CD8-positive, alpha-beta memory T cell (primary cell): ENCODE measurements at regions of chr3 and their contacts with region 1.

Region 1: DNA sequence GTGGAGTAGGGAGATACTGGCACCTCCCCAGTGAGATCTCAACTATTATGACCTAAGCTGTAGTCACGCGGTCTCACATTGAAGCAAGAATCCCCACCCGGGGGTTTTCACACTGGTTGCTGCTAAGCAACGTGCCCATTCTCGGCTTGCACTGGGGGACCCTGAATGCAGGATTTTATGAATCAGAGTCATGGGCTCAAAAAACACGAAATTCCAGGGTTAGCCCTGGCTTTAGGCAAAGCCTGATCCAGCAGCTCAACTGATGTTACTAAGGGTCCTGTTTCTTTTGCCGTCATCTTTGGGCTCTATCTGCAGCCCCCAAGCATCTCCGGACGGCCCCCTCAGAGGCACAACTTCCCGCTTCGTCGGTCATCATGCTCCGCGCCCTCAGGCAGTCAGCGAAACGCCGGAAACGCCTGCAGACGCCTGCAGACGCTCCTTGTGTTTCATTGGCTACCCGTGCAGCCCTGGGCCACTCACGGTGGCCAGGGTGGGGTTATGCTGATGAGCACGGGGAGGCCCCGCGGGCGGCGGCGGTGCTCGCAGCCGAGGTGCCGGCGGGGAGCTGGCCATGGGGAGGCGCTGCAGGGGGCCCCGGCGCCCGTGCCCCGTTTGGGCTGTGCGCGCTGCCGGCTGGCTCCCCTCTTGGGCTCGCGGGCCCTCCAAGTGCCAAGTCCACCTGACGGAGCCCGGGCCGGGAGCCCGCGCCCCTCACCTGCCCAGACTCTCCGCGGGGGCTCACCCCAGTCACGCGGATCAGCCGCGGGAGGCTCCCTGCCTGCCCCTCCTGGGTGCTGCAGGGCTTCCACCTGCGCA is 25.8 kb downstream of the EFCC1 start:
- DNase-seq: peak; percentile 89 to 95 (median 93)
- H3K4me3 ChIP-seq: peak overlapping the region; percentile 66
- H3K4me3 Mint-ChIP-seq: peak overlapping the region; percentile 26 to 93 (median 85)
- H3K27ac ChIP-seq: peak overlapping the region; percentile 77
- H3K27ac Mint-ChIP-seq: peak overlapping the region; percentile 92 to 99 (median 98)
- H3K4me1 ChIP-seq: peaks cover 16% of the 10 kb centered on the region
- H3K4me1 Mint-ChIP-seq: peaks cover 24 to 34% (median 24%) of the 10 kb centered on the region in 3 donors
- H3K27me3 ChIP-seq: no peaks in the 10 kb centered on the region
- H3K27me3 Mint-ChIP-seq: no peaks in the 10 kb centered on the region

Region 2: DNA sequence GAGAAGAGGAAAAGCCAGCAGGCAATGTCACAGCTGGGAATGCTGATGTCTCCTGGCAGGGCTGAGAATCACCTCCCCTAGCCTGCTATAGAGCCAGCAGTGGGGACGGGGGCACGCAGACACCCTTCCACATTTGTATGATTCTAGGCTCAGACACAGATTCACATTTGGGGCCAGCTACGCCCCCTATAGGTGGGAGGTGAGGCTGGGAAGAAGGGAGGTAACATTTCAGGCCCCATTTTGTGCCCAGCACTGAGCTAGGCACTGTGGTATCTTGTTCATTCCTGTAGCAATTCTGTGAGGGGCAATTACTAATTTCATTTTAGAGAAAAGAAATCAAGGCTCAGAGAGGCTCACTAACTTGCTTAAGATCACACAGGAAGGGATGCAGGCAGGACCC is 163.4 kb before region 1 on chr3:
- CTCF ChIA-PET with region 1: no interaction called
- POLR2A ChIA-PET with region 1: no interaction called
- DNase-seq: no peak
- H3K4me3 ChIP-seq: no peak overlapping the region
- H3K4me3 Mint-ChIP-seq: no peak overlapping the region
- H3K27ac ChIP-seq: no peak overlapping the region
- H3K27ac Mint-ChIP-seq: no peak overlapping the region
- H3K4me1 ChIP-seq: no peaks in the 10 kb centered on the region
- H3K4me1 Mint-ChIP-seq: no peaks in the 10 kb centered on the region
- H3K27me3 ChIP-seq: no peaks in the 10 kb centered on the region
- H3K27me3 Mint-ChIP-seq: peaks cover 0 to 3% of the 10 kb centered on the region in 2 donors

Region 3: DNA sequence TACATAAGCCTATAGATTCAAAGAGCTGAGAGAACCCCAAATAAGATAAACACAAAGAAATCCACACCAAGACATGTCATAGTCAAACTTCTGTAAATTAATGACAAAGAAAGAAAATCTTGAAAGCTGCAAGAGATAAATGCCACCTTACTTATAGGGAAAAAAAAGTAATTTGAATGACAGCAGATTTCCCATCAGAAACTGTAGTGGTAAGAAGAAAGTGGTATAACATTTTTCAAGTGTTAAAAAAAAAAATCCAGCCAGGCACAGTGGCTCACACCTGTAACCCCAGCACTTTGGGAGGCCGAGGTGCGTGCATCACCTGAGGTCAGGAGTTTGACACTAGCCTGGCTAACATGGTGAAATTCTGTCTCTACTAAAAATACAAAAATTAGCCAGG is 70.5 kb before region 1 on chr3:
- CTCF ChIA-PET with region 1: no interaction called
- POLR2A ChIA-PET with region 1: no interaction called
- DNase-seq: no peak
- H3K4me3 ChIP-seq: no peak overlapping the region
- H3K4me3 Mint-ChIP-seq: no peak overlapping the region
- H3K27ac ChIP-seq: no peak overlapping the region
- H3K27ac Mint-ChIP-seq: no peak overlapping the region
- H3K4me1 ChIP-seq: no peaks in the 10 kb centered on the region
- H3K4me1 Mint-ChIP-seq: no peaks in the 10 kb centered on the region
- H3K27me3 ChIP-seq: no peaks in the 10 kb centered on the region
- H3K27me3 Mint-ChIP-seq: peaks cover 5 to 8% of the 10 kb centered on the region in 2 donors

Region 4: GRCh38 chr3:128993461-128994173 is 33.3 kb before region 1 on chr3 and contains the start of gene CFAP92:
- CTCF ChIA-PET with region 1: interaction called, 12 read pairs
- POLR2A ChIA-PET with region 1: interaction called, 10 read pairs
- DNase-seq: peak; percentile 83 to 94 (median 89)
- H3K4me3 ChIP-seq: peak within 1 kb of the TSS; percentile 53
- H3K4me3 Mint-ChIP-seq: peak within 1 kb of the TSS; percentile 66 to 83 (median 77)
- H3K27ac ChIP-seq: no peak within 1 kb of the TSS
- H3K27ac Mint-ChIP-seq: peak within 1 kb of the TSS; percentile 50 to 96 (median 78)
- H3K4me1 ChIP-seq: peaks cover 23% of the 10 kb centered on the region
- H3K4me1 Mint-ChIP-seq: peaks cover 8 to 16% (median 9%) of the 10 kb centered on the region in 3 donors
- H3K27me3 ChIP-seq: no peaks in the 10 kb centered on the region
- H3K27me3 Mint-ChIP-seq: peaks cover 2 to 5% of the 10 kb centered on the region in 2 donors
- total RNA-seq, gene CFAP92: 0.13 TPM in 1 of 2 experiments, not detected in the other

Region 5: DNA sequence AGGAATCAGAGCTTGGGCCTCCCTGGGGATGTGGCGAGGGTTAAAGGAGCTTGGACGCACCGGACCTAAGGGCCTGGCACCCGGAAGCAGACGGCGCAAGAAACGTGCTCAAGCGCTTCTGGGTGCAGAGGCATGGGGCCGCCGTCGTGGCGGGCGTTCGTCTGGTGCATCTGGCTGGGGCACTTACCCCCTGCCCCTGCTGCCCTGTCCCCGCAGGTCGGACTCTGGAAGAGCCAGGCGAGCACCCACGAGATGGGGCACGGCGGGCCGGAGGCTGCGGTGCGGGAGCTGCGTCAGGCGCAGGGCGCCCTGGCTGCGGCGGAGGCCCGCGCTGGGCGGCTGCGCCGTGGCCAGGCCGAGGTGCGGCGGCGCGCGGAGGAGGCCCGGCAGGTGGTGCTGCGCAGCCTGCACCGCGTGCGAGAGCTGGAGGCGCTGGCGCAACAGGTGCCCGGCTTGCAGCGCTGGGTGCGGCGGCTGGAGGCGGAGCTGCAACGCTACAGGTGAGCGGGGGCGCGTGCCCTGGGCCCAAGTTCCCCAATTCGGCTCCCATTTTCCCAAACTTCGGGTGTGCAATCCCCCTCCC is 23.3 kb before region 1 on chr3:
- CTCF ChIA-PET with region 1: interaction called, 19 read pairs
- POLR2A ChIA-PET with region 1: no interaction called
- DNase-seq: peak; percentile 26 to 70 (median 55)
- H3K4me3 ChIP-seq: no peak overlapping the region
- H3K4me3 Mint-ChIP-seq: peak overlapping the region in 5 of 7 donors; percentile 29 to 63 (median 48)
- H3K27ac ChIP-seq: no peak overlapping the region
- H3K27ac Mint-ChIP-seq: peak overlapping the region in 1 of 8 donors; percentile 38
- H3K4me1 ChIP-seq: peaks cover 16% of the 10 kb centered on the region
- H3K4me1 Mint-ChIP-seq: peaks cover 23 to 43% (median 30%) of the 10 kb centered on the region in 3 donors
- H3K27me3 ChIP-seq: peaks cover 14% of the 10 kb centered on the region
- H3K27me3 Mint-ChIP-seq: peaks cover 32 to 33% of the 10 kb centered on the region in 2 donors

Region 6: GRCh38 chr3:129058441-129059200 is 31.7 kb after region 1 on chr3:
- CTCF ChIA-PET with region 1: interaction called, 29 read pairs
- POLR2A ChIA-PET with region 1: no interaction called
- DNase-seq: no peak
- H3K4me3 ChIP-seq: no peak overlapping the region
- H3K4me3 Mint-ChIP-seq: no peak overlapping the region
- H3K27ac ChIP-seq: no peak overlapping the region
- H3K27ac Mint-ChIP-seq: no peak overlapping the region
- H3K4me1 ChIP-seq: peaks cover 4% of the 10 kb centered on the region
- H3K4me1 Mint-ChIP-seq: peaks cover 1 to 2% (median 2%) of the 10 kb centered on the region in 3 donors
- H3K27me3 ChIP-seq: no peaks in the 10 kb centered on the region
- H3K27me3 Mint-ChIP-seq: peaks cover 0 to 5% of the 10 kb centered on the region in 2 donors

Region 7: DNA sequence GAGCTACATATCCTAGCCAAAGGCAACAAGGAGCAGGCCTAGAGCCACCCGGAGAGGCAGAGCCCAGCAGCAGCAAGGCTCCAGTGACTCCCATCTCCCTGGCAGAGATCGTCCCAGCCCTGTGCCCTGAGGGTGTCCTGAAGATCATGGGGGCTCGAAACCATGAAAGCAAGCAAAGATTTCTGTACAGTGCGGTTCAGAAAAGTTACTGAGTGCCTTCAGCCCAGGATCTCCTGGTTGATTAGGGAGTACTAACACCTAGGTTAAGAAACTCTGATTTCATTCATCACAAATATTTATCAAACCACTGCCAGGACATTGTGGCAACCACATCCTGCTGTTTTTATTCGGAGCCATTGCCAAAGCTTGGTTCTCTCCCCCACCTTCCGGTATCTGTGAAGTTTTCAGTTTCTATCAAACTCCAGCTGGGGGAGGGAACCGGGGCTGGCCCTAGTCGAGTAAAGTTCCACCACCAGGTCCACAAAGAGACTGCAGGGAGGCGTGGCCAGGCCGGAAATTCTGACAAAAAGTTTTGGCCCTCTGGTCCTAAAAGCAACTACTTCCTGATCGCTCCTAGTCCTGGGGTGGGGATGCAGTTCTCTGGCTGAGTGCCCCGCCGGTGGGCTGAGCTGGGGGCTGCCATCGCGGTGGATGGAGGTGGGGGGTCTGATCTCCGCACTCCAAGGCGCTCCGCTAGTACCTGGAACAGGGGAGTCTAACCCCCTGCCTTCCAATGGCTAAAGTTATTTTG is 93.5 kb after region 1 on chr3:
- CTCF ChIA-PET with region 1: interaction called, 8 read pairs
- POLR2A ChIA-PET with region 1: interaction called, 16 read pairs
- DNase-seq: peak; percentile 81 to 94 (median 93)
- H3K4me3 ChIP-seq: peak overlapping the region; percentile 93
- H3K4me3 Mint-ChIP-seq: peak overlapping the region; percentile 83 to 95 (median 90)
- H3K27ac ChIP-seq: peak overlapping the region; percentile 80
- H3K27ac Mint-ChIP-seq: peak overlapping the region; percentile 87 to 98 (median 96)
- H3K4me1 ChIP-seq: peaks cover 45% of the 10 kb centered on the region
- H3K4me1 Mint-ChIP-seq: peaks cover 60 to 65% (median 62%) of the 10 kb centered on the region in 3 donors
- H3K27me3 ChIP-seq: no peaks in the 10 kb centered on the region
- H3K27me3 Mint-ChIP-seq: no peaks in the 10 kb centered on the region

Region 8: GRCh38 chr3:129249276-129250065 is 222.5 kb after region 1 on chr3 and contains the start of gene COPG1:
- CTCF ChIA-PET with region 1: interaction called, 16 read pairs
- POLR2A ChIA-PET with region 1: no interaction called
- DNase-seq: peak; percentile 77 to 91 (median 88)
- H3K4me3 ChIP-seq: peak within 1 kb of the TSS; percentile 100
- H3K4me3 Mint-ChIP-seq: peak within 1 kb of the TSS; percentile 96 to 100 (median 97)
- H3K27ac ChIP-seq: peak within 1 kb of the TSS; percentile 97
- H3K27ac Mint-ChIP-seq: peak within 1 kb of the TSS; percentile 95 to 100 (median 98)
- H3K4me1 ChIP-seq: peaks cover 25% of the 10 kb centered on the region
- H3K4me1 Mint-ChIP-seq: peaks cover 37 to 55% (median 42%) of the 10 kb centered on the region in 3 donors
- H3K27me3 ChIP-seq: no peaks in the 10 kb centered on the region
- H3K27me3 Mint-ChIP-seq: peaks cover 0 to 2% of the 10 kb centered on the region in 2 donors
- total RNA-seq, gene COPG1: 134 to 136 TPM

Region 9: DNA sequence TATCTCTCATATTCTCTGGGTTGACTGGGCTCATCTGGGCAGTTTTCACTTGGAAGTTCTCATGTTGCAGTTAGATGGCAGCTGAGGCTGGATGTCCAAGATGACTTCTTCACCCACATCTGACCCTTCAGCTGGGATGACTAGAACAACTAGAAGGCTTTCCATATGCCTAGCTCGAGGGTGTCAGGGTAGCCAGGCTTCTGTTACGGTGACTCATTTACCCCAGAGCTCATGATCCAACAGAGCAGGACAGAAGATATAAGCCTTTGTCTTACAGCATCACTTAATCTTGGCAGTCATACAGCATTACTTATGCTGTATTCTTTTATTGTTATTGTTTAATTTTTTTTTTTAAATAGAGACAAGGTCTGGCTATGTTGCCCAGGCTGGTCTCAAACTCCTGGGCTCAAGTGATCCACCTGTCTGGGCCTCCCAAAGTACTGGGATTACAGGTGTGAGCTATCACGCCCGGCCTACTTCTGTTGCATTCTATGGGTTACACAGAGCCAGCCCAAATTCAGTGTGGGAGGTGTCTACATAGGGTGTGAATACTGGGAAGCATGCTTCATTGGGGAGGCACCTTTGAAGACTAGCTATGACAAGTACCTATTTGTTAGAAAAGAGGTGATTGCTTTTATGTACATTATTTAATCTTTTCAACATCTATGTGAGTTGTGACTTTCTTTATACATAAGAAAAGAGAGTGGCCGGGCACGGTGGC is 262.4 kb after region 1 on chr3:
- CTCF ChIA-PET with region 1: no interaction called
- POLR2A ChIA-PET with region 1: no interaction called
- DNase-seq: no peak
- H3K4me3 ChIP-seq: no peak overlapping the region
- H3K4me3 Mint-ChIP-seq: no peak overlapping the region
- H3K27ac ChIP-seq: no peak overlapping the region
- H3K27ac Mint-ChIP-seq: peak overlapping the region in 2 of 8 donors; percentile 38 to 47
- H3K4me1 ChIP-seq: no peaks in the 10 kb centered on the region
- H3K4me1 Mint-ChIP-seq: peaks cover 16 to 33% (median 25%) of the 10 kb centered on the region in 3 donors
- H3K27me3 ChIP-seq: no peaks in the 10 kb centered on the region
- H3K27me3 Mint-ChIP-seq: no peaks in the 10 kb centered on the region